Dorsolateral prefrontal cortex (tissue), 120 donors: ENCODE measurements at regions of chr17 and their contacts with region 1.

Region 1: DNA sequence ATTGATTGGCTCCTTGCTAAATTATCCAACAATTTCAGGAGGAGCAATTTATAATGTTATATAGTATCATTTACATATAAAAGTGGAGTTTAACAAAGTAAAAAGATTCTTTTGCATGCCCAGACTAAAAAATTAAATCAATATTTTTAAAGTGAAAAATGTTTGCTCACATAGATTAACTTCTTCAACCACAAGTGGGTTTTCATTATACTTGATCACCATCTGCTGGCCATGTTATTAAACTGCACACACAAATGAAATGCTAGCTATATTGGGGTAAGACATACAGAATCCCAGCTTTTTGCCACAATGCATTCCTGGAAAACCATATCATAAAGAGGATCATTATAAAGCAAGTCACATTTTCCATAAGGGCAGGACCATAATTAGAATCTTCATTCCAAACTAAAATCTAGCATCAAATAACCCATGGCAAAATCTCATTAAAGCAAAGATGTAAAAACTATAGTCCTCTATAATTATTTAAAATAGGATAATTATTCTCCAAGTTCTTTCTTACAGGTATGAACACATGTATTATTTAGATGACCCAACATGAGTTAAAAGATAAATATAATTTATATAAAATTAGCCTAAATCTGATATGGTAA is 26.3 kb downstream of the CEP112 start:
- DNase-seq: no peak
- H3K4me3 ChIP-seq: no peak overlapping the region
- H3K27ac ChIP-seq: no peak overlapping the region
- H3K27me3 ChIP-seq: no peaks in the 10 kb centered on the region
- CTCF ChIP-seq: peak; percentile 59 to 93 (median 81)

Region 2: GRCh38 chr17:65231662-65232335 is 933.8 kb before region 1 on chr17:
- intact Hi-C with region 1: loop called (anchors 5 kb)
- DNase-seq: peak in 7 of 10 donors; percentile 33 to 53 (median 39)
- H3K4me3 ChIP-seq: no peak overlapping the region
- H3K27ac ChIP-seq: no peak overlapping the region
- H3K27me3 ChIP-seq: peaks cover 0 to 3% (median 0%) of the 10 kb centered on the region in 45 donors
- CTCF ChIP-seq: peak in 55 of 56 donors; percentile 24 to 81 (median 62)

Region 3: GRCh38 chr17:65294179-65294720 is 871.4 kb before region 1 on chr17:
- intact Hi-C with region 1: loop called (anchors 1 to 5 kb)
- DNase-seq: peak; percentile 20 to 77 (median 61)
- H3K4me3 ChIP-seq: peak overlapping the region in 1 of 59 donors; percentile 9
- H3K27ac ChIP-seq: no peak overlapping the region
- H3K27me3 ChIP-seq: no peaks in the 10 kb centered on the region
- CTCF ChIP-seq: peak; percentile 39 to 86 (median 77)

Region 4: GRCh38 chr17:65794572-65794971 is 371.0 kb before region 1 on chr17:
- intact Hi-C with region 1: no loop called
- DNase-seq: no peak
- H3K4me3 ChIP-seq: no peak overlapping the region
- H3K27ac ChIP-seq: no peak overlapping the region
- H3K27me3 ChIP-seq: peaks cover 0 to 4% (median 0%) of the 10 kb centered on the region in 45 donors
- CTCF ChIP-seq: peak in 33 of 56 donors; percentile 8 to 50 (median 24)

Region 5: DNA sequence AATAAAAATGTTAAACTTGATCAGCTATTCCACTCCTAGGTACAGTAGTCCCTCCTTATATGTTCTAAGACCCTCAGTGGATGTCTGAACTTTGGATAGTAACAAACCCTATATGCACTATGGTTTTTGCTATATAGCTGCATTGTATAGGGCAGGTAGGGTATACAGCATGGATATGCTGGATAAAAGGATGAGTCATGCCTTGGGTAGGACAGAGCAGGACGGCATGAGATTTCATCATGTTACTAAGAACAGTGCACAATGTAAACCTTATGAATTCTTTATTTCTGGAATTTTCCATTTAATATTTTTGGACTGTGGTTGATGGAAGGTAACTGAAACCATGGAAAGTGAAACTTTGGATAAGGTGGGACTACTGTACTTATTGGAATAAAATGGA is 208.8 kb before region 1 on chr17:
- intact Hi-C with region 1: no loop called
- DNase-seq: no peak
- H3K4me3 ChIP-seq: no peak overlapping the region
- H3K27ac ChIP-seq: no peak overlapping the region
- H3K27me3 ChIP-seq: no peaks in the 10 kb centered on the region
- CTCF ChIP-seq: no peak